Heart right ventricle (tissue), 16 donors: ENCODE measurements at regions of chr10 and their contacts with region 1.

Region 1: GRCh38 chr10:86234551-86235270 is 131.9 kb downstream of the GRID1 start:
- DNase-seq: no peak
- ATAC-seq: no peak
- H3K4me3 ChIP-seq: no peak overlapping the region
- H3K27ac ChIP-seq: no peak overlapping the region
- H3K4me1 ChIP-seq: peaks cover 0 to 3% (median 0%) of the 10 kb centered on the region in 9 donors
- H3K27me3 ChIP-seq: peaks cover 0 to 13% (median 0%) of the 10 kb centered on the region in 7 donors
- CTCF ChIP-seq: no peak

Region 2: GRCh38 chr10:86033581-86033980 is 201.1 kb before region 1 on chr10:
- intact Hi-C with region 1: loop called in 1 of 10 experiments (anchors 5 kb)
- DNase-seq: no peak
- ATAC-seq: no peak
- H3K4me3 ChIP-seq: no peak overlapping the region
- H3K27ac ChIP-seq: no peak overlapping the region
- H3K4me1 ChIP-seq: peaks cover 0 to 15% (median 0%) of the 10 kb centered on the region in 9 donors
- H3K27me3 ChIP-seq: no peaks in the 10 kb centered on the region
- CTCF ChIP-seq: no peak